Naive thymus-derived CD4-positive, alpha-beta T cell (primary cell): ENCODE measurements at regions of chr5 and their contacts with region 1.

Region 1: GRCh38 chr5:175657593-175658271 is at the start of gene HRH2:
- DNase-seq: peak; percentile 20 to 69 (median 46)
- ATAC-seq: peak; percentile 71
- H3K4me3 ChIP-seq: peak within 1 kb of the TSS; percentile 70
- H3K4me3 Mint-ChIP-seq: peak within 1 kb of the TSS; percentile 84 to 100 (median 96)
- H3K27ac ChIP-seq: peak within 1 kb of the TSS; percentile 71
- H3K27ac Mint-ChIP-seq: peak within 1 kb of the TSS; percentile 80 to 94 (median 88)
- H3K4me1 ChIP-seq: peaks cover 41 to 59% of the 10 kb centered on the region in 2 donors
- H3K4me1 Mint-ChIP-seq: peaks cover 77 to 98% (median 92%) of the 10 kb centered on the region in 7 donors
- H3K27me3 ChIP-seq: no peaks in the 10 kb centered on the region
- H3K27me3 Mint-ChIP-seq: peaks cover 0 to 2% (median 0%) of the 10 kb centered on the region in 5 donors
- total RNA-seq, gene HRH2: 5.6 to 26.3 (median 12.9) TPM

Region 2: GRCh38 chr5:175517818-175518450 is 139.8 kb before region 1 on chr5:
- CTCF ChIA-PET with region 1: no interaction called
- POLR2A ChIA-PET with region 1: interaction called, 3 read pairs
- intact Hi-C with region 1: loop called in 1 of 2 experiments (anchors 1 kb)
- DNase-seq: peak in 2 of 9 donors; percentile 62 to 81
- ATAC-seq: no peak
- H3K4me3 ChIP-seq: no peak overlapping the region
- H3K4me3 Mint-ChIP-seq: peak overlapping the region; percentile 26 to 80 (median 54)
- H3K27ac ChIP-seq: peak overlapping the region; percentile 22
- H3K27ac Mint-ChIP-seq: peak overlapping the region; percentile 60 to 97 (median 93)
- H3K4me1 ChIP-seq: peaks cover 44 to 50% of the 10 kb centered on the region in 2 donors
- H3K4me1 Mint-ChIP-seq: peaks cover 47 to 87% (median 76%) of the 10 kb centered on the region in 7 donors
- H3K27me3 ChIP-seq: no peaks in the 10 kb centered on the region
- H3K27me3 Mint-ChIP-seq: no peaks in the 10 kb centered on the region

Region 3: DNA sequence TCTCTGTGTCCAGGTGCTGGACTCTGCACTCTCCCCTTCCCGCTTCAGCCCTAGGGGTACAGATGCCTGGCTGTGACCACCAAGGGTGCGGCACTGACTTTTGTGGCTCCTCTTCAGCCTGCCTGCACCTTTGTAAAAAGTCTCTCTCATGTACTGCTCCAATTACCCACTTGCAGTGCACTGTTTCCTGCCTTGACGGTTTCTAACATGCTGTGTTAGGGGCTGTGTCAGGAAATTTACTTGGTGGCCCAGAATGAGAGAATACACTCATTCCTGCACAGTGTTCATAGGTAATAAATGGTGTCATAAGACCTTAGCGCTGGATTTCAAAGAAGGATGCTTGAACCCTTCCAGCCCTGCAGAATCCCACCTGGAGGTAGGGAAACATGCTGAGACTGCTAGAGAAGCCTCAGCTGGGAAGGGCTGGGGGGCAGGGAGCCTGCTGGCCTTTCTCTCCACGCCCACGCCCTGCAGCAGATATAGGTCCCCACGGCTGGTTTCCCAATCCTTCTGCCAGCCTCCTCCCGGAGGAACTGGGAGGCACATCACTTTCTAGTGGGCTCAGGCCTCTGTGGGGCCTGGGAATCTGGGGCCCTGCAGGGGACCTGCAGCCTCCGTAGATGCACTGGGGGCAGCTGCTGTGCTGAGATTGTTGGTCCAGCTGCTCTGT is 17.5 kb before region 1 on chr5:
- CTCF ChIA-PET with region 1: no interaction called
- POLR2A ChIA-PET with region 1: interaction called, 3 read pairs
- intact Hi-C with region 1: loop called in 1 of 2 experiments (anchors 2 kb)
- DNase-seq: peak in 5 of 9 donors; percentile 23 to 42 (median 32)
- ATAC-seq: peak; percentile 38
- H3K4me3 ChIP-seq: peak overlapping the region; percentile 8
- H3K4me3 Mint-ChIP-seq: peak overlapping the region; percentile 36 to 93 (median 77)
- H3K27ac ChIP-seq: peak overlapping the region; percentile 47
- H3K27ac Mint-ChIP-seq: peak overlapping the region; percentile 51 to 92 (median 89)
- H3K4me1 ChIP-seq: peaks cover 0 to 28% of the 10 kb centered on the region in 2 donors
- H3K4me1 Mint-ChIP-seq: peaks cover 17 to 55% (median 46%) of the 10 kb centered on the region in 7 donors
- H3K27me3 ChIP-seq: no peaks in the 10 kb centered on the region
- H3K27me3 Mint-ChIP-seq: peaks cover 0 to 9% (median 0%) of the 10 kb centered on the region in 5 donors

Region 4: GRCh38 chr5:175895215-175896102 is 237.7 kb after region 1 on chr5:
- CTCF ChIA-PET with region 1: no interaction called
- POLR2A ChIA-PET with region 1: no interaction called
- intact Hi-C with region 1: loop called in 1 of 2 experiments (anchors 10 kb)
- DNase-seq: peak in 8 of 9 donors; percentile 30 to 71 (median 55)
- ATAC-seq: peak; percentile 96
- H3K4me3 ChIP-seq: peak overlapping the region; percentile 25
- H3K4me3 Mint-ChIP-seq: peak overlapping the region; percentile 47 to 85 (median 75)
- H3K27ac ChIP-seq: no peak overlapping the region
- H3K27ac Mint-ChIP-seq: peak overlapping the region in 6 of 9 donors; percentile 1 to 86 (median 57)
- H3K4me1 ChIP-seq: peaks cover 11 to 23% of the 10 kb centered on the region in 2 donors
- H3K4me1 Mint-ChIP-seq: peaks cover 9 to 40% (median 29%) of the 10 kb centered on the region in 7 donors
- H3K27me3 ChIP-seq: no peaks in the 10 kb centered on the region
- H3K27me3 Mint-ChIP-seq: peaks cover 0 to 44% (median 5%) of the 10 kb centered on the region in 5 donors